Activated B cell treated with CpG ODN at 0.5 μM for 24 hours (primary cell): ENCODE measurements at regions of chr3 and their contacts with region 1.

Region 1: GRCh38 chr3:44021651-44022594 is 219.8 kb upstream of the TOPAZ1 start:
- DNase-seq: no peak
- ATAC-seq: no peak
- H3K4me3 Mint-ChIP-seq: peak overlapping the region; percentile 74
- H3K27ac Mint-ChIP-seq: no peak overlapping the region
- H3K4me1 Mint-ChIP-seq: peaks cover 7% of the 10 kb centered on the region
- H3K27me3 Mint-ChIP-seq: peaks cover 33% of the 10 kb centered on the region
- CTCF ChIP-seq: no peak

Region 2: GRCh38 chr3:44036850-44037249 is 14.9 kb after region 1 on chr3:
- CTCF ChIA-PET with region 1: no interaction called
- POLR2A ChIA-PET with region 1: no interaction called
- intact Hi-C with region 1: loop called (anchors 2 kb)
- DNase-seq: no peak
- ATAC-seq: no peak
- H3K4me3 Mint-ChIP-seq: no peak overlapping the region
- H3K27ac Mint-ChIP-seq: no peak overlapping the region
- H3K4me1 Mint-ChIP-seq: peaks cover 10% of the 10 kb centered on the region
- H3K27me3 Mint-ChIP-seq: no peaks in the 10 kb centered on the region
- CTCF ChIP-seq: no peak

Region 3: DNA sequence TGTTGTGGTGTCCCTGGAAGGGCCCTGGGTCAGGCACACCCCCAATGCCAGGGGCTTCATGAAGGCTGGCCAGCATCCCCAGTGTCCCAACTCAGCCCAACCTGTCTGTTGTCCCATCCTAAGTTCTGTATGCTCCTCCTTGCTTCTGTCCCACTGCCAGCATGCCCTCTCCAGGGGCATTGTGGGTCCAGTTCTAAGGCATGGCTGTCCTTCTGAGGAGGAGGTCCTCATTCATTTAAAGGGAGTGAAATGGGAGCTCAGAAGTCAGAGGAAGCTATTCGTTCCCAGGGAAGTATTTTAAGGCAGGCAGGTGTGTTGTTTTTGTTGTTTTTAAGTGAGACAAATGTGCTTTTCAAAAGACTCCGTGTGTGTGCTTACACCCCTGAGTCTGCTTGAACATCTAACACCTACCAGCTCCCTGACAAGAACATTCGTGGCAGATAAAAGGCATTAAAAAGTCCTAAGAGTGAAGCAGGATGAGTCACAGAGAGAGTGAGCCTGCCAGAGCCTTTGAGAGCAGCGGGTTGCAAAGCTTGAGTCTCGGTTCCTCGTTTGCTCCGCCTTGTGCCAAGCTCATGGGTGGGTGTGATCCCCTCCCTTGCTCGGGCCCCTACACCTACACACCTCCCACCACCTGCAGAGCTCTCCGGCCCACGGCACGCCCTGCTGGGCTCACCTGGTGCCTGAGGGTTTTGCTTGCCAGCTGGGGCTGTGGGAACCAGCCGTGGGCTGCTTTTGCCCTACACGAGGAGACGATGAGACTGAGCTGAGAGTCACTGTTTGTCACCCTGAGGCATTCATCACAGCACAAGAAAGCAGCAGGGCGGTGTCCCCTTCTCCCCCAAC is 36.3 kb after region 1 on chr3:
- CTCF ChIA-PET with region 1: no interaction called
- POLR2A ChIA-PET with region 1: no interaction called
- intact Hi-C with region 1: loop called (anchors 5 kb)
- DNase-seq: peak; percentile 69
- ATAC-seq: peak; percentile 97
- H3K4me3 Mint-ChIP-seq: peak overlapping the region; percentile 75
- H3K27ac Mint-ChIP-seq: peak overlapping the region; percentile 92
- H3K4me1 Mint-ChIP-seq: peaks cover 38% of the 10 kb centered on the region
- H3K27me3 Mint-ChIP-seq: no peaks in the 10 kb centered on the region
- CTCF ChIP-seq: no peak